Activated CD8-positive, alpha-beta T cell treated with anti-CD3 and anti-CD28 coated beads for 36 hours (primary cell): ENCODE measurements at regions of chr15 and their contacts with region 1.

Region 1: DNA sequence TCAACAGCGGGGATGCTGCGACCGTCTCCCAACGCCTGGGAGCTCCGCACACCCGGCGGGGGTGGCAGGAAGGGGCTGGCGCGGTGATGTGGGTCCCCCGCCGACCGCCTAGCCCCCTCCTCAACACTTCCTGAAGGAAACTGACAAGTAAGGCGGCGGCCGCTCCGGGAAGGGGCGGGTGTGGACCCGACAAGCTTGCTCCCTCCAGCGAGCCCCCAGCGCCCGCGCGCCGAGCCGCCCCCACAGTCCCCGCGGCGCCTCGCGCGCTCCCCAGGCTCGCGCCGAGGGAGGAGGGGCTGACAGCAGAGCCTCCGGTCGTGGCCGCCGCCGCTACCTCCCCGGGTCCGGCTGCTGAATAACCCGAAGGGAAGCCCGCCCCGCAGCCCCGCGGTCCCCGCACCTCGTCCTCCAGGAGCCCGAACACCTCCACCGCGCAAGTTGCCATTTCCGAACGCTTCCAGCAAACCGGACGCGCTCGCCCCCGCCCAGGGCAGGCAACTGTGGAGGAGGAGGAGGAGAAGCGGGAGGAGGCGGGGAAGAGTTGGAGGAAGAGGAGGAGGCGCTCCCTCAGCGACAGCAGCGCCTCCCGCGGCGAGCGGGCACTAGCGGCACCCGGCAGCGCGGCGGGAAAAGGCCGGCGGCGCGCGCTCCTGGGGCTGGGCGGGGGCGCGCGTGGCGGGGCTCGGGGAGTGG is at the start of gene NEDD4:
- DNase-seq: peak; percentile 75
- ATAC-seq: peak; percentile 88
- H3K4me3 Mint-ChIP-seq: peak within 1 kb of the TSS; percentile 85
- H3K27ac Mint-ChIP-seq: peak within 1 kb of the TSS; percentile 81
- H3K4me1 Mint-ChIP-seq: peaks cover 22% of the 10 kb centered on the region
- H3K27me3 Mint-ChIP-seq: peaks cover 17% of the 10 kb centered on the region
- CTCF ChIP-seq: peak; percentile 40
- total RNA-seq, gene NEDD4: 10.4 to 11.8 TPM

Region 2: GRCh38 chr15:55829826-55830225 is 163.4 kb before region 1 on chr15:
- CTCF ChIA-PET with region 1: no interaction called
- POLR2A ChIA-PET with region 1: no interaction called
- intact Hi-C with region 1: no loop called
- DNase-seq: peak; percentile 4
- ATAC-seq: peak; percentile 87
- H3K4me3 Mint-ChIP-seq: no peak overlapping the region
- H3K27ac Mint-ChIP-seq: peak overlapping the region; percentile 41
- H3K4me1 Mint-ChIP-seq: peaks cover 16% of the 10 kb centered on the region
- H3K27me3 Mint-ChIP-seq: no peaks in the 10 kb centered on the region
- CTCF ChIP-seq: no peak

Region 3: DNA sequence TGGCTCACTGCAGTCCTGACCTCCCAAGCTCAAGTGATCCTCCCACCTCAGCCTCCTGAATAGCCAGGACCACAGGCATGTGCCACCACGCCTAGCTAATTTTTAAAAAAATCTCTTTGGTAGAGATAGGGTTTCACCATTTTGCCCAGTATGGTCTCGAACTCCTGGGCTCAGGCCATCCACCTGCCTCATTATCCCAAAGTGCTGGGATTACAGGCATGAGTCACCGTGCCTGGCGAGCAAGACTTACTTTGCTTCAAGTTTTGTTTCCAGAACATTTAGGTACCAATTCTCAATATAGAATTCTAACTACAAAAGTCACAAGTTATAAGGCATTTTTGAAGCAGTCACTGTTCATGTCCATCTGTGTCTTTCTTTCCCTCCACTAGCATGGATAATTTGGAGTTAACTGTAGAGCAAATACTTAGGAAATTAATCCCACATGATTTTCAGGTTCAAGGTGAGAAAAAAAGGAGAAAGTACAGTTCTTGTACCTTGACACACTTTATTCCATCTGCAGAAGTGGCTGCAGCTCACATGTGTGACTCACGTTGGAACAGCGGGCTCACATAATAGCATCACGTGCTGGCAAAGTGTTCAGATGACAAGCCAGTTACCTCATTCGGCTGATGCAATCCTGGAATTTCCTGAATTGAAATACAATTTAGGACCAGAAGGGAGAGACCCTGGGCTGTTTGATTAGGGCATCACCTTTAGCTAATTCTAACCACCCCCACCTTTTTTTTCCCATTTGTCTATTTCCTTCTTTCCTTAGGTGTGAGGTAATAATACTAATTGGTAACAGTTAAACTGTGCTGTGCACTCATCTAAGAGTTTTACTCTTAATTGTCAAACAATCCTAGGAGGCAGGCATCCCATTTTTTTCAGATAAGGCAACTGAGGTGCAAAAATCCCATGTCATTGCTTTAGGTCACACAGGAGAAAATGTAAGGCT is 47.1 kb after region 1 on chr15:
- CTCF ChIA-PET with region 1: interaction called, 4 read pairs
- POLR2A ChIA-PET with region 1: interaction called, 3 read pairs
- intact Hi-C with region 1: loop called (anchors 5 kb)
- DNase-seq: peak; percentile 55
- ATAC-seq: no peak
- H3K4me3 Mint-ChIP-seq: no peak overlapping the region
- H3K27ac Mint-ChIP-seq: peak overlapping the region; percentile 60
- H3K4me1 Mint-ChIP-seq: peaks cover 59% of the 10 kb centered on the region
- H3K27me3 Mint-ChIP-seq: no peaks in the 10 kb centered on the region
- CTCF ChIP-seq: no peak